MCF 10A (cell line): ENCODE measurements at regions of chr3 and their contacts with region 1.

Region 1: GRCh38 chr3:141828487-141829268 is 47.8 kb upstream of the ATP1B3 start:
- DNase-seq: peak; percentile 92
- H3K4me3 Mint-ChIP-seq: no peak overlapping the region
- H3K27ac Mint-ChIP-seq: peak overlapping the region; percentile 35
- H3K4me1 Mint-ChIP-seq: peaks cover 23% of the 10 kb centered on the region
- H3K27me3 Mint-ChIP-seq: no peaks in the 10 kb centered on the region
- CTCF ChIP-seq: no peak

Region 2: DNA sequence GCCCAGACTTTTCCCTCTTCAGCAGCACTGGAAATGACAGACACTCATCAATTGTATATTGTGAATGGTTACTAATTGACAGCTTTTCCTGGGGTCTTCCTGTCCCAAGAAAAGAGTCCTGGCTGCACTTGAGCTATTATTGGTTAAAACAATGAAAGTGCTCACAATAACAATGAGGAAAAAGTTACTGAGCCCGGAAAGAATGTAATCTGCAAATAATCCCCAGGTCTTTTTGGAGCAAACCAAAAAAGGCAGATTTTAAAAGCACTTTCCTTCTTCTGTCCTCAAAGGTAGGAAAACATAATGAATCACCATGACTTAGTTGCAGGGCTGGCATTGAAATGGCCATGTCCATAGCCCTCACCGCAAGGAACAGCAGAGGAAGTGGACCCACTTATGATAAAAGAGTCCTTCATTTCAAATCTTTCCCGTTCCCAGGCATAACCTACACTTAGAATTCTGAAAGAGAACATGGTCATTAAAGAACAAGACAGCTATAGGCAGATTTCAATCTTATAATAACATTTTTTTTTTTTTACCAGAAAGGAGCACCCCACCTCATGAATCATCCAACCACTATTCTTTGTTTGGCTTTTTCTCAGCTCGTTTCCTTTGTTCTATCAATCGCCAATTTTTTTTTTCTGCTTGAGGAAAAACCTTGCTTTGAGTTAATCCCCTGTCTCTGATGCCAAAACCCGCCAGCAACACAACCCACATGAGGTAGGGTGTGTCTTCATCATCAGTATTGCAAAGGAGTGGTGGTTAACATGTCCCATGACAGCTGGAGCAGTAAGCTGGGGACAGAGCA is 12.3 kb after region 1 on chr3:
- CTCF ChIA-PET with region 1: interaction called, 3 read pairs
- POLR2A ChIA-PET with region 1: interaction called, 32 read pairs
- intact Hi-C with region 1: no loop called
- DNase-seq: peak; percentile 82
- H3K4me3 Mint-ChIP-seq: peak overlapping the region; percentile 53
- H3K27ac Mint-ChIP-seq: peak overlapping the region; percentile 92
- H3K4me1 Mint-ChIP-seq: peaks cover 14% of the 10 kb centered on the region
- H3K27me3 Mint-ChIP-seq: no peaks in the 10 kb centered on the region
- CTCF ChIP-seq: no peak

Region 3: GRCh38 chr3:141853081-141853601 is 24.5 kb after region 1 on chr3:
- CTCF ChIA-PET with region 1: interaction called, 3 read pairs
- POLR2A ChIA-PET with region 1: interaction called, 13 read pairs
- intact Hi-C with region 1: no loop called
- DNase-seq: no peak
- H3K4me3 Mint-ChIP-seq: no peak overlapping the region
- H3K27ac Mint-ChIP-seq: no peak overlapping the region
- H3K4me1 Mint-ChIP-seq: peaks cover 8% of the 10 kb centered on the region
- H3K27me3 Mint-ChIP-seq: no peaks in the 10 kb centered on the region
- CTCF ChIP-seq: no peak

Region 4: DNA sequence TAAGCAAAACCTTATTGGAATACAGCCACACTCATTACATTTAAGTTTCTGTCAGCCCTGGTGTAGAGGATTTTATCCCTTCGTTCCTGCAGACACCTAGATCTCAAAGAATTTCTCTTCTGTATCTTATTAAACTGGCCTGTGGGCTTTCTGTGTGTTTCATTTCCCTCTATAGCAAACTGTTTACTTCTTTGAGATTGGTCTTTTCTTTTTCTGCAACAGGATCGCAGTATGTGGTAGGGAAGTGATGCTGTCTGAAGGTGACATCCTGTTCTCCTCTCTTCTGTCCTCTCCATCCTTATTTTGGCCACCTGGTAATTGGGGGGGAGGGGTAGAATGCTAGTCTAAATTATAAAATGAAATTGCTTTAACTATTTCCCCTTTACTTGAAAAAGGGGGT is 73.2 kb after region 1 on chr3:
- CTCF ChIA-PET with region 1: no interaction called
- POLR2A ChIA-PET with region 1: no interaction called
- intact Hi-C with region 1: no loop called
- DNase-seq: no peak
- H3K4me3 Mint-ChIP-seq: no peak overlapping the region
- H3K27ac Mint-ChIP-seq: no peak overlapping the region
- H3K4me1 Mint-ChIP-seq: peaks cover 11% of the 10 kb centered on the region
- H3K27me3 Mint-ChIP-seq: no peaks in the 10 kb centered on the region
- CTCF ChIP-seq: no peak